Activated CD8-positive, alpha-beta T cell treated with anti-CD3 and anti-CD28 coated beads for 36 hours (primary cell): ENCODE measurements at regions of chr1 and their contacts with region 1.

Region 1: GRCh38 chr1:45490626-45491486 is at the start of gene TESK2:
- DNase-seq: peak; percentile 98
- ATAC-seq: peak; percentile 95
- H3K4me3 Mint-ChIP-seq: no peak within 1 kb of the TSS
- H3K27ac Mint-ChIP-seq: no peak within 1 kb of the TSS
- H3K4me1 Mint-ChIP-seq: peaks cover 11% of the 10 kb centered on the region
- H3K27me3 Mint-ChIP-seq: no peaks in the 10 kb centered on the region
- CTCF ChIP-seq: no peak
- total RNA-seq, gene TESK2: 2.9 to 3.7 TPM

Region 2: DNA sequence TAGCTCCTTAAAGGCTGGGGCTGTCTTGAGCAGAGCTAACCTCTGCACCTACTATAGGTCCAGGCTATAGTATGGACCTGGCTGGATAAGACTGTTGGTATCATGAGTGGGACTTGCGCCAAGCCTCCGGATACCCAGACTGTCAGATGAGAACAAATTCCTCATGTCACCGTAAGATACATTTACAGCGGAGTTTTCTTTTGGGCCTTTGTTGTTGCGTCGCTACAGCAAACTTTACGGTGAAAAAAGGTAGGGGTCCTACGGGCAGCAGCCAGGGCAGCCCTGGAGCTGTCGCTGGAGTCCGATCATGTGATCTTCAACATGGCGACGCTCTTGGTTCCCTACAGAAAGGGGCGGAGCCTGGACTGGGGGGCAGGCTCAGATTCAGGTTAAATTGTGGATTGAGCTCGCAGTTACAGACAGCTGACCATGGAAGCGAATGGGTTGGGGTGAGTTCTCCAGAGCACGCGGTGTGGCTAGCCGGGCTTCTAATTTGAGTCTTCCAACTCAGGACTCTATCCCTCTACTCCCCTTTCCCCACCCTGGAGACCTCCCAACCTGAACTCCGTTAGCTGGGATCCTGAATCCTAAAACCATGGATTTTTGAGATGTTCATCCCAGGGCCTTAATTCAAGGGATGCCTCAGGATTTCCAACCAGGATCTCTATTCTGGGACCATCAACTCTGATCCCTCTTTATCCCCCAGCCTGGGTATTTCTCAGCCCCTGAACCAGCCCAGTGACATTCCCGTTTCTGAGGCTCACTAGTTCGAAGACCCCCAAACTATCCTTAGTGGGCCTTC is 478.8 kb before region 1 on chr1 and contains the start of gene UROD:
- CTCF ChIA-PET with region 1: interaction called, 27 read pairs
- POLR2A ChIA-PET with region 1: interaction called, 6 read pairs
- intact Hi-C with region 1: loop called (anchors 5 kb)
- DNase-seq: peak; percentile 98
- ATAC-seq: peak; percentile 85
- H3K4me3 Mint-ChIP-seq: peak within 1 kb of the TSS; percentile 77
- H3K27ac Mint-ChIP-seq: peak within 1 kb of the TSS; percentile 92
- H3K4me1 Mint-ChIP-seq: peaks cover 31% of the 10 kb centered on the region
- H3K27me3 Mint-ChIP-seq: no peaks in the 10 kb centered on the region
- CTCF ChIP-seq: no peak
- total RNA-seq, gene UROD: 109 to 113 TPM

Region 3: DNA sequence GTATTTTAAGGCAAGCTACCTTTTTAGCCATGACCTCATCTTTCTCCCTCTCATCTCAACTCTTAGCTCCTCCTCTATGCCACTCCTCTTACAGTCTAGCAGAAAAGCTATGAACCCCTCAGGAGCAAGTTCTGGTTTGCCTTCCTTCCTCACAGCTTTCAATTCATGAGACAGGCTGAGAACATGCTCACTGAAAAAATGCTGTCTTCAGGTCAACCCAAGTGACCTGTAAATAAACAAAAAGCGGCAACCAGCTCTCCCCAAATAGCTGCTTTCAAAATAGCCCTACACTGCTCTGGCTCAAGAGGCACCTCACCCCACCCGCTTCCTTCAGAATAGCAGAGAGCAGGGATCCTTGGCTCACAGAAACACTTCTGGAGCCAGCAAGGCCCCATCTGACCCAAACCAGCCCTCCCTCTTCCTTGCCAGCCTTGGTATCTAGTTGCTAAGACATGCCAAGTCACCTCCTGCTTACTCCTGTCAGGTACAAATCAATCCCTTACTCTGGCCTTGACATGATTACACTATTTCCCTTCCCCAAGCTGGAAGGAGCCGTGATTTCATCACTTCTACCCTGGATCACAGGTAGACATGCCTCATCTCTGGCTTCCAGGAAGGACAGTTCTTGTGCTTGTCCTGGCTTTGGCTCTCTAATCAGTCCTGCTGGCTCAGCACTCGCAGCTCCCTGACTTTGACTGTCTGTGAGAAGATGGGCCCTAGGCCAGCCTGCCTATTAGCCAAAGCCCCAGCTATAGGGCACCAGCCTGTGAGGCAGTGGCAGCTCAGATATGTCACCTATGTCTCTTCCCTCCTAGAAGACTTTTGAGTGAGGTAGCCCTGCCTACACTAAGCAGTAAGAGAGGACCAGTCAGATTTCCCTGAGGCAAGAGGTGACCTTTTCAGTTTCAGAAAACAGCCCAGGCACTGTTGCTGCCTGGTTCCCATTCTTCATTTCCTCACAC is 141.9 kb before region 1 on chr1:
- CTCF ChIA-PET with region 1: interaction called, 191 read pairs
- POLR2A ChIA-PET with region 1: interaction called, 6 read pairs
- intact Hi-C with region 1: no loop called
- DNase-seq: no peak
- ATAC-seq: peak; percentile 78
- H3K4me3 Mint-ChIP-seq: no peak overlapping the region
- H3K27ac Mint-ChIP-seq: no peak overlapping the region
- H3K4me1 Mint-ChIP-seq: peaks cover 8% of the 10 kb centered on the region
- H3K27me3 Mint-ChIP-seq: no peaks in the 10 kb centered on the region
- CTCF ChIP-seq: no peak

Region 4: GRCh38 chr1:45393718-45394302 is 97.0 kb before region 1 on chr1:
- CTCF ChIA-PET with region 1: interaction called, 11 read pairs
- POLR2A ChIA-PET with region 1: interaction called, 3 read pairs
- intact Hi-C with region 1: no loop called
- DNase-seq: peak; percentile 24
- ATAC-seq: peak; percentile 82
- H3K4me3 Mint-ChIP-seq: no peak overlapping the region
- H3K27ac Mint-ChIP-seq: peak overlapping the region; percentile 49
- H3K4me1 Mint-ChIP-seq: peaks cover 14% of the 10 kb centered on the region
- H3K27me3 Mint-ChIP-seq: no peaks in the 10 kb centered on the region
- CTCF ChIP-seq: no peak

Region 5: GRCh38 chr1:45521398-45522323 is 30.8 kb after region 1 on chr1 and contains the start of gene PRDX1:
- CTCF ChIA-PET with region 1: interaction called, 3 read pairs
- POLR2A ChIA-PET with region 1: interaction called, 20 read pairs
- intact Hi-C with region 1: no loop called
- DNase-seq: peak; percentile 96
- ATAC-seq: peak; percentile 92
- H3K4me3 Mint-ChIP-seq: peak within 1 kb of the TSS; percentile 97
- H3K27ac Mint-ChIP-seq: peak within 1 kb of the TSS; percentile 95
- H3K4me1 Mint-ChIP-seq: peaks cover 38% of the 10 kb centered on the region
- H3K27me3 Mint-ChIP-seq: peaks cover 1% of the 10 kb centered on the region
- CTCF ChIP-seq: no peak
- total RNA-seq, gene PRDX1: 547 to 553 TPM